Cardiac septum (tissue), 1 donor: ENCODE measurements at regions of chr6 and their contacts with region 1.

Region 1: DNA sequence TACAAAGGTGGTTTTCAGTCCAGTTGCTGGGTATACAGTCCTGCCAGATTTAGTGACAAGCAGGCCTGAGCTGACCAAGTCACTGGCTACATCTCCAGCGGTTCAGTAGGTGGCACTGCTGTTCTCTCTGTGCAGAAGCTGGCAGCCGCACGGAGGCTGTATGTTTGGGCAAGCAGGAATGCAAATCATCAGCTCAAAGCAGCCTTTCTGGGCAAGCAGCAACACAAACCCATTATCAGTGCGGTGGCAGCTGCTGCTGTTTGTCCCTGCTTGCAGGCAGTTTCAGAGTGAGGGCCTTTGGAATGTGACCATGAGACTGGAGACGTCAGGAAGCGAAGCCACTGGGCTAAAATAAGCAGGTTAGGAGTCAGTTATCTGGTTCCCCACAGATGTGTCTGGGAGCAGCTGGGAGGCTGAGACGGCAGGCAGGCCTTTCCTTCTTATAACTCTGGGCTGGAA is 72.5 kb downstream of the TXLNB start:
- DNase-seq: peak; percentile 90

Region 2: GRCh38 chr6:138882369-138883017 is 336.8 kb before region 1 on chr6:
- intact Hi-C with region 1: no loop called
- DNase-seq: no peak

Region 3: DNA sequence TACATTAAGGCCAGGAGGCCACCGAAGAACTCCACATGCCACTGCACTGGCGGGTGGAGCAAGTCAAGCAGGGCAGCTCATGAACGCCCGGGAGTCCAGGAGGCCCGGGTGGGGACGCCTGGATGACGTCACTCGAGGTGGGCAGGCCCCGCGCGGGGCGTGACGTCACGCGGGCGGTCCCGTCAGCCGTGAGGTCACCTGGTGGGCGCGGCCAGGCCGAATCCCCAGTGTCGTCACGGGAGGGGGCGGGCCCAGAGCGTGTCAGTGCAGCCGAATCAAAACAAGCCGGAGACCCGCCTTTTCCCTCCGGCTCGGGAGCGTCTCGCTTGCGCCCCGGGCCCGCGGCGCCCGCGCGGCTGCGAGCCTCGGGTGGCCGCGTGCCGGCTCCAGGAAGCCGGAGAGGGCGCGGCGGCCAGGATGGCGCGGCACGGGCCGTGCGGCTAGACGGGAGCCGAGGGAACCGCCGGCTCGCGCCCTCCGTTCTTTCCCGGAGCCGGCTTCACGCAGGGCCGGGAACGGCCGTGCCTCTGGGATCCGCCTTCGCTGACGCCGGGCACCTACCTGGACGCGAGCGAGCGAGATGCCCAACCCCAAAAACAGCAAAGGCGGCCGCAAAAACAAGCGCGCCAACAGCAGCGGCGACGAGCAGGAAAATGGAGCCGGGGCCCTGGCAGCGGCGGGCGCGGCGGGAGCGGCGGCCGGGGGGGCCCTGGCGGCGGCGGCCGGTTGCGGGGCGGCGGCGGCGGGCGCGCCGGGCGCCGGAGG is 84.3 kb before region 1 on chr6 and contains the start of gene HECA:
- intact Hi-C with region 1: loop called (anchors 2 kb)
- DNase-seq: peak; percentile 100
- total RNA-seq, gene HECA: 51.0 TPM